MCF 10A (cell line): ENCODE measurements at regions of chr5 and their contacts with region 1.

Region 1: GRCh38 chr5:138542956-138543729 is at the start of gene ETF1:
- DNase-seq: peak; percentile 100
- H3K4me3 Mint-ChIP-seq: peak within 1 kb of the TSS; percentile 79
- H3K27ac Mint-ChIP-seq: peak within 1 kb of the TSS; percentile 97
- H3K4me1 Mint-ChIP-seq: peaks cover 32% of the 10 kb centered on the region
- H3K27me3 Mint-ChIP-seq: no peaks in the 10 kb centered on the region
- CTCF ChIP-seq: no peak
- total RNA-seq, gene ETF1: 307 and 349 TPM in 2 replicates

Region 2: GRCh38 chr5:137310051-137310730 is 1233.0 kb before region 1 on chr5:
- CTCF ChIA-PET with region 1: no interaction called
- POLR2A ChIA-PET with region 1: no interaction called
- intact Hi-C with region 1: no loop called
- DNase-seq: peak; percentile 88
- H3K4me3 Mint-ChIP-seq: peak overlapping the region; percentile 18
- H3K27ac Mint-ChIP-seq: peak overlapping the region; percentile 95
- H3K4me1 Mint-ChIP-seq: peaks cover 28% of the 10 kb centered on the region
- H3K27me3 Mint-ChIP-seq: no peaks in the 10 kb centered on the region
- CTCF ChIP-seq: no peak

Region 3: DNA sequence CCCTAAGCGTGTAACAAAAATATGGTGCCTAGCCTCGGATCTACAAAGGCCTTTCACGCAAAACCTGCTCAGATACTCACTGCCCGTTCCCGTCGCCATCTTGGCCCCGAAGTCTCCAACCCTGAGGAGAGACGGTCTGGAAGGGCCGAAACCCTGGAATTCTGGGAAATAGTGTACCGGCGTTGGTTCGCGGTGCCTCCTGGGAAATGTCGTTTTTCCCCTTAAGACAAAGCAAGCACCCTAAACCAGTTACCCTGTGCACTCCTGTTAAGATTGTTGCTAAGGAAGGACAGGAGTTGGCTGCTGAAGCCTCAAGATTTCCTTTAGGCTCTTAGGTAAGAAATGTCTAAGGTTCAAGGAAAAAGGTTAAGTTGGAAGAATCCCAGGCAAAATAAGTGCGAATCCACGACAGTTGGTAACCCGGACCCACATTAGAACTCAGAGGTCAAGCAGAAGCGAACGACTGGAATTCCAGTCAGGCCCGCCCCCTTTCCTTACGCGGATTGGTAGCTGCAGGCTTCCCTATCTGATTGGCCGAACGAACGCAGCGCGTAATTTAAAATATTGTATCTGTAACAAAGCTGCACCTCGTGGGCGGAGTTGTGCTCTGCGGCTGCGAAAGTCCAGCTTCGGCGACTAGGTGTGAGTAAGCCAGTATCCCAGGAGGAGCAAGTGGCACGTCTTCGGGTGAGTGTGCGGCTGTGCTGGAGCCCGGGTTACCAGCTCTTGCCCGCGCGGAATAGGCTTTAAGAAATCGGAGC is 364.4 kb before region 1 on chr5 and contains the starts of genes BRD8 and KIF20A:
- CTCF ChIA-PET with region 1: no interaction called
- POLR2A ChIA-PET with region 1: interaction called, 37 read pairs
- intact Hi-C with region 1: loop called (anchors 2 kb)
- DNase-seq: peak; percentile 100
- H3K4me3 Mint-ChIP-seq: no peak within 1 kb of the TSS
- H3K27ac Mint-ChIP-seq: no peak within 1 kb of the TSS
- H3K4me1 Mint-ChIP-seq: peaks cover 17% of the 10 kb centered on the region
- H3K27me3 Mint-ChIP-seq: no peaks in the 10 kb centered on the region
- CTCF ChIP-seq: no peak
- total RNA-seq, gene BRD8: 93.4 and 108 TPM in 2 replicates
- total RNA-seq, gene KIF20A: 19.0 and 30.6 TPM in 2 replicates

Region 4: DNA sequence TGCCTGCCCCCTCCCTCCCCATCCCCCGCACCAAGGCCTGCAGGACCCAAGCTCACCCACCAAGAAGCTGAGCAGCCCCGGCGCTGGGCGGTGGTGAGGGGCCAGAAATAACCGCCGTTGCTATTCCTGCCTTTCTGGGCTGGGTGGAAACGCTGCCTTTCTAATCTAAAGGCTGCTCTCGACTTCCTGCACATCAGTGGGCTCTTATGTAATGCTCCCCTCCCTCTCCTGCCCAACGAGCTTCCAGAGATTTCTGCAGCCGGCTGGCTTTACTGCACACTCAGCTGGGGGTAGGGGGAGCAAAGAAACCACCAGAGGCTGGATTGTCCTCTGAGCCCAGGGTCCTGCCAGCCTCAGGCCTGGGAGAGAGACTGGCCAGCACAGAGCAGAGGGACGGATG is 84.8 kb before region 1 on chr5:
- CTCF ChIA-PET with region 1: interaction called, 111 read pairs
- POLR2A ChIA-PET with region 1: interaction called, 219 read pairs
- intact Hi-C with region 1: no loop called
- DNase-seq: no peak
- H3K4me3 Mint-ChIP-seq: no peak overlapping the region
- H3K27ac Mint-ChIP-seq: no peak overlapping the region
- H3K4me1 Mint-ChIP-seq: peaks cover 15% of the 10 kb centered on the region
- H3K27me3 Mint-ChIP-seq: no peaks in the 10 kb centered on the region
- CTCF ChIP-seq: no peak

Region 5: GRCh38 chr5:138498376-138498775 is 44.8 kb before region 1 on chr5:
- CTCF ChIA-PET with region 1: interaction called, 124 read pairs
- POLR2A ChIA-PET with region 1: interaction called, 276 read pairs
- intact Hi-C with region 1: no loop called
- DNase-seq: no peak
- H3K4me3 Mint-ChIP-seq: no peak overlapping the region
- H3K27ac Mint-ChIP-seq: no peak overlapping the region
- H3K4me1 Mint-ChIP-seq: peaks cover 26% of the 10 kb centered on the region
- H3K27me3 Mint-ChIP-seq: no peaks in the 10 kb centered on the region
- CTCF ChIP-seq: no peak

Region 6: DNA sequence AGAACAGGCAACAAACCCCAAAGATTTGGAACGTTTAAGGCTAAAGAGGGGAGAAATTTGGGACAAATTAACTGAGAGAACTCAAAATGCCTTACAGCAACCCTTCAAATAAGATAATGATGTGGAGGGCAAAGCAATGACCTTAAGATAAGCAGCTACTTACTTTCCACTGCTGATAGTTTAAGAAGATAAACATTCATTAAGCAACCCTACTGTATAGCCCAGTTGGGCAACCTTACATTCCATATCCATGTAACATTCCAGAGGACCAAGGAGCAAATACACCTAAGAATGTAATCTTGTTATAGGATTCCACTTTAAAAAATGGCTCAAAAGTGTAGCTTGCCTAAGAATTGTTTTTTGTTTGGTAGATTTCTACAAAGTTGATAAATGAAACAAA is 14.9 kb before region 1 on chr5:
- CTCF ChIA-PET with region 1: interaction called, 71 read pairs
- POLR2A ChIA-PET with region 1: interaction called, 256 read pairs
- intact Hi-C with region 1: no loop called
- DNase-seq: peak; percentile 41
- H3K4me3 Mint-ChIP-seq: peak overlapping the region; percentile 1
- H3K27ac Mint-ChIP-seq: no peak overlapping the region
- H3K4me1 Mint-ChIP-seq: peaks cover 49% of the 10 kb centered on the region
- H3K27me3 Mint-ChIP-seq: no peaks in the 10 kb centered on the region
- CTCF ChIP-seq: no peak

Region 7: DNA sequence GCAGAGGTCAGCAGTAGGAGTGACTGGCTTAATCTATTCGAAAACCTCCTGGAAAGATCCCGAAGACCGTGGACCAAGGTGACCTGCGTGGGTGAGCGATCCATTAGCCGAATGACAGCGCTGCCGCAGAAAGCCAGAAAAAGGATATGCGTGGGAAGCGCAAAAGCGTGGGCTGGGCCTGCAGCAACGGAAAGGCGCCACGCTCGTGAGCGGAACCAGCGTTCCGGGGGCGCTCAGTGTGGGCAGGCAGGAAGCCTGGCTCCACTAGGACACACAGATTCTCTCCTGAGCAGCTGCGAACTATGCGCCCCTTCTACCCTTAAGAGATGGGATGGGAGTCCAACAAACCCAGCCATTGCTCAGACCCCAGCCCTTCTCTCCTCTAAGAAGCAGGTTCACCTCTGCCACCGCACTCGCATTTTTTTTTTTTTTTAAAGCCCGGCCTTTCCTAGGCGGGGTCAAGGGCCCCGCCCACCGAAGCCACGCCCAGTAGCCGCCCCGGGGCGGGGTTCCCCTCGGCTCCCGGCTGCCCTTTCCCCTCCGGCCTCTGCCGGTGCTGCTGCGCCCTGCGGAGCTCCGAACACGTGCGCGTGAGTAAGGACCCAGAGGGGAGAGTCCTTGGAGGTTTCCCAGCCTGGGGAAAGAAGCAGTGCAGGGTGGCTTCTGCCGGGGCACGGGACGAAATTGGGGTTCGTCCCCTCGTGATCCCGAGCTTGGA is 730.6 kb after region 1 on chr5:
- CTCF ChIA-PET with region 1: interaction called, 4 read pairs
- POLR2A ChIA-PET with region 1: interaction called, 10 read pairs
- intact Hi-C with region 1: no loop called
- DNase-seq: peak; percentile 95
- H3K4me3 Mint-ChIP-seq: peak overlapping the region; percentile 74
- H3K27ac Mint-ChIP-seq: peak overlapping the region; percentile 65
- H3K4me1 Mint-ChIP-seq: peaks cover 49% of the 10 kb centered on the region
- H3K27me3 Mint-ChIP-seq: no peaks in the 10 kb centered on the region
- CTCF ChIP-seq: peak; percentile 10